CD8-positive, alpha-beta T cell (primary cell): ENCODE measurements at regions of chr6 and their contacts with region 1.

Region 1: DNA sequence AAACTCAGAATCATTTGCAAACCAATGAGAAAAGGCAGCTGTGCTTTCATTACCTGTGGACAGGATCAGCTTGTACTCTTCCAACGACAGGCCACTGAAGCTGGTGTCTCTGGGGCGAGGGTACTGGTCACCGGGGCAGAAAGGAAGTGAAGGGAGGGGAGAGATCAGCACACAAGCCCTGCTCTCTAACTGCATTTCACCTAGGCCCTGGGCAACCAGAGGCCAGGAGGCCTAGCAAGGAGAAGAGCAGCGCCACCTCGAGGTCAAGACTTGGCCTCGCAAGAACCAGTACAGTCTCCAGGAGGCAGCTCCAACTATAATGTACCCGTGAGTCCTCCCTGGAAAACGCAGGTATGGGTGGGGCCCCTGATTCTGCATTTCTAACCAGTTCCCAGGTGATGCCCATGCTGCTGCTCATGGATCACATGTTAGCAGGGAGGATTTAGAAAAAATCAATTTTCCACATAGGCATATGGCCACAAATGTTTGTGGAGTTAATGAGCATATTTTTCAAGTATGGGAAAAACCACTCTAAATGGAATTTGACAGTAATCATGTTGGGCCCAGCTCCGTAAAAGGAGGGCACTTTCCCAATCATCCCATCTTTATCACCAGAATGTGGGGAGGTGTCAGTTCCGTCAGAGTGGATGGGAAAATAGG is 11.0 kb downstream of the UQCC2 start:
- DNase-seq: peak; percentile 46 to 84 (median 78)
- ATAC-seq: peak; percentile 71
- H3K4me3 ChIP-seq: no peak overlapping the region
- H3K4me3 Mint-ChIP-seq: no peak overlapping the region
- H3K27ac ChIP-seq: peak overlapping the region in 1 of 2 experiments; percentile 48
- H3K27ac Mint-ChIP-seq: peak overlapping the region; percentile 60
- H3K4me1 ChIP-seq: peaks cover 31% of the 10 kb centered on the region
- H3K4me1 Mint-ChIP-seq: peaks cover 35% of the 10 kb centered on the region
- H3K27me3 ChIP-seq: no peaks in the 10 kb centered on the region
- H3K27me3 Mint-ChIP-seq: no peaks in the 10 kb centered on the region
- CTCF ChIP-seq: peak; percentile 63

Region 2: DNA sequence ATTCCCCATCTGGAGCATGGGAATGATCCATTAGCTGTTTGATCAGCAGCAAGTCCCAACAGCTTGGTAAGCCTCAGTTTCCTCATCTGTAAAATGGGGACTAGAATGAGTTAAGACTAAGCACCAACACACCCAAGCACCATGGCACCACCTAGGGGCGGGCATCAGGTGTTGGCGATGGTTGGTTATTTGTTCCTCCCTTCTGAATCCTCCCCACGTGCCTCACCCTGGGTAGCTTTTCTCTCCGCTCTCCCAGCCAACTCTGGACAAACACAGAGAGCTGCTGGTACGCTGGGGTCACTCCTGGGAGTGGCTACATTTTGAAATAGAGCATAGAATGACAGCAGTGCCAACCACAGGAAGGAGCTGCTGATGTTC is 92.7 kb before region 1 on chr6:
- CTCF ChIA-PET with region 1: interaction called, 12 read pairs
- POLR2A ChIA-PET with region 1: no interaction called
- intact Hi-C with region 1: no loop called
- DNase-seq: peak in 2 of 9 experiments; percentile 52 to 59
- ATAC-seq: no peak
- H3K4me3 ChIP-seq: no peak overlapping the region
- H3K4me3 Mint-ChIP-seq: no peak overlapping the region
- H3K27ac ChIP-seq: no peak overlapping the region
- H3K27ac Mint-ChIP-seq: no peak overlapping the region
- H3K4me1 ChIP-seq: no peaks in the 10 kb centered on the region
- H3K4me1 Mint-ChIP-seq: peaks cover 1% of the 10 kb centered on the region
- H3K27me3 ChIP-seq: no peaks in the 10 kb centered on the region
- H3K27me3 Mint-ChIP-seq: peaks cover 4% of the 10 kb centered on the region
- CTCF ChIP-seq: no peak

Region 3: DNA sequence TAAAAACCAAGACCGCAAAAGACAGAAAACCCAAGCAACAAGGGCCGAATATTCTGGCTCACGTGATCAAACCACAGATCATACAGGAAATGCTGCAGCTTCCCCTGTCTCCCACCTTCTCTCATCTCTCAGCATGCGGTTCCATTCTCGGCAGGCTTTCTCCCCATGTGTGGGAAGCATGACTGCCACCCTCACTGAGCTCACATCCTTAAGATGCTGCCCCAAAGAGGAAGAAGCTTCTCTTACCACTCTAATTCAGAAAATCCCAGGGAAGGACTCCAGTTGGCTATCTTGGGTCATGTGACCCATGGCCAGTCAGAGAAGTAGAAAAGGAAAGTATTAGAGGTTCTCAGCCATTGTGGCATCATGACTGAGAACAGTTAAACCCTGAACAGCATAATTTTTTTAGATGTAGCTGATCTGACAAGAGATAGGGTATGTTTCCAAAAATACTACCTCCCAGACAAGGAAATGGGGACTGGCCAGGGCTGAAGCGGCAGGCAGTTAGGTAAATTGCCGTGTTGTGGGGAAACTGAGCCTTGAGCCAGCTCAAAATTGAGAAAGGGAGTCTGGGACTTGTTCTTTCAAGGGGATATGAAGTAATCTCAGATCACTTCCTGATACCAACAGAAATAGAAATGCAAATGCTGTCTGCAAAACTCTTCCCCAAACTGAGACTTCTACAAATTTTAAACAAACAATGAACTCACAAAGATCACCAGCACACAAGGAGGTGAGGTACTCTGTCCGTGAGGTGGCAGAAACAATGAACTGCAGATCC is 482.4 kb after region 1 on chr6:
- CTCF ChIA-PET with region 1: no interaction called
- POLR2A ChIA-PET with region 1: no interaction called
- intact Hi-C with region 1: no loop called
- DNase-seq: peak; percentile 48 to 95 (median 72)
- ATAC-seq: peak; percentile 92
- H3K4me3 ChIP-seq: peak overlapping the region in 1 of 2 experiments; percentile 18
- H3K4me3 Mint-ChIP-seq: peak overlapping the region; percentile 44
- H3K27ac ChIP-seq: peak overlapping the region in 1 of 2 experiments; percentile 68
- H3K27ac Mint-ChIP-seq: peak overlapping the region; percentile 87
- H3K4me1 ChIP-seq: peaks cover 21% of the 10 kb centered on the region
- H3K4me1 Mint-ChIP-seq: peaks cover 34% of the 10 kb centered on the region
- H3K27me3 ChIP-seq: no peaks in the 10 kb centered on the region
- H3K27me3 Mint-ChIP-seq: no peaks in the 10 kb centered on the region
- CTCF ChIP-seq: no peak